Colonic mucosa (tissue), 4 donors: ENCODE measurements at regions of chr11 and their contacts with region 1.

Region 1: GRCh38 chr11:111230122-111230465 is 15.4 kb upstream of the POU2AF2 start:
- DNase-seq: no peak
- H3K4me3 ChIP-seq: peak overlapping the region; percentile 17
- H3K27ac ChIP-seq: no peak overlapping the region
- H3K4me1 ChIP-seq: no peaks in the 10 kb centered on the region
- H3K27me3 ChIP-seq: no peaks in the 10 kb centered on the region
- CTCF ChIP-seq: no peak

Region 2: GRCh38 chr11:110447897-110448745 is 782.0 kb before region 1 on chr11:
- intact Hi-C with region 1: loop called (anchors 10 kb)
- DNase-seq: no peak
- H3K4me3 ChIP-seq: no peak overlapping the region
- H3K27ac ChIP-seq: no peak overlapping the region
- H3K4me1 ChIP-seq: no peaks in the 10 kb centered on the region
- H3K27me3 ChIP-seq: no peaks in the 10 kb centered on the region
- CTCF ChIP-seq: peak; percentile 41

Region 3: DNA sequence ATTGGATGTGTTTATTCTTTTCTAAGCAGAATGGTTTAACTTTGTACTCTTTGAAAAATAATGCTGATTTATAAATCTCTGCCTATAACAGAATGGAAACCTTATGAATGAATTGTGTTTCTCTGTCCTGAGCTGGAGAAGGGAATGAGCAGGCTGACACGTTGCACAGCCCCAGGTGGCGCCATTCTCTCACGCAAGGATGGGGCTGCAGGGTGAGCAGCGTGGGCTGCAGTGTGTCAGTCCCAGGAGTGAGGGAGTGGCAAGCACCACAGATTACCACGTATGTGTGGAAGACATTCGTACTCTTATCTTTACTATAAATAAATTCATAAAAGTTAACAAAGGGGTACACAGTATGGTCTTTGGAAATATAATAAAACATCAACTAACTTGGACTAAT is 766.9 kb before region 1 on chr11:
- intact Hi-C with region 1: loop called (anchors 10 kb)
- DNase-seq: peak; percentile 46
- H3K4me3 ChIP-seq: no peak overlapping the region
- H3K27ac ChIP-seq: no peak overlapping the region
- H3K4me1 ChIP-seq: no peaks in the 10 kb centered on the region
- H3K27me3 ChIP-seq: no peaks in the 10 kb centered on the region
- CTCF ChIP-seq: peak; percentile 48

Region 4: GRCh38 chr11:110715541-110715940 is 514.6 kb before region 1 on chr11:
- intact Hi-C with region 1: loop called (anchors 5 kb)
- DNase-seq: no peak
- H3K4me3 ChIP-seq: no peak overlapping the region
- H3K27ac ChIP-seq: no peak overlapping the region
- H3K4me1 ChIP-seq: peaks cover 3% of the 10 kb centered on the region
- H3K27me3 ChIP-seq: peaks cover 16% of the 10 kb centered on the region
- CTCF ChIP-seq: no peak

Region 5: GRCh38 chr11:111761036-111761435 is 530.9 kb after region 1 on chr11:
- intact Hi-C with region 1: no loop called
- DNase-seq: no peak
- H3K4me3 ChIP-seq: no peak overlapping the region
- H3K27ac ChIP-seq: no peak overlapping the region
- H3K4me1 ChIP-seq: no peaks in the 10 kb centered on the region
- H3K27me3 ChIP-seq: no peaks in the 10 kb centered on the region
- CTCF ChIP-seq: no peak